ENCODE measurements at regions of chr22 and their contacts with region 1.

Region 1: DNA sequence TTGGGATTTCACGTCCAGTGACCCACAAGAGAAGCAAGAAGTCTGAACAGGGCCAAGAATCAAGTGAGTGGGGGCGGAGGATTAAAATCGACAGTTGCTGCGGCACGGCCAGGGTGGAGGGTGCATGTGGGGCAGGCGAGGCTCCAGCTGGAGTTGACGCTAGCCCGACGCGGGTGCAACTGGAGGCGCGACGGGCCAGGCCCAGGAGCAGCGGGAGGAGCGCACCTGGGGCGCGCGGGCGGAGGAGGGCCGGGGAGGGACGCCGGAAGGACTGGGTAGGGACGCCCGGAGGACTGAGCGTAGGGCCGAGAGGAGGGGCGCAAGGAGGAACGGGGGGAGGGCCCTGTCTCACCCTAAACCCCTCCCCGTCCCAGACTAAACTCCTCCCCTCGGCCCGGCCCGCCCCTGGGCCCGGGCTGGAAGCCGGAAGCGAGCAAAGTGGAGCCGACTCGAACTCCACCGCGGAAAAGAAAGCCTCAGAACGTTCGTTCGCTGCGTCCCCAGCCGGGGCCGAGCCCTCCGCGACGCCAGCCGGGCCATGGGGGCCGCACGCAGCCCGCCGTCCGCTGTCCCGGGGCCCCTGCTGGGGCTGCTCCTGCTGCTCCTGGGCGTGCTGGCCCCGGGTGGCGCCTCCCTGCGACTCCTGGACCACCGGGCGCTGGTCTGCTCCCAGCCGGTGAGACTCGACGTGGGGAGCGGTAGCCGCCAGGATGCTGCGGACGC is at the start of gene IL17RA:
- DNase-seq: peak; percentile 95
- H3K4me3 Mint-ChIP-seq: peak within 1 kb of the TSS; percentile 84
- H3K27ac Mint-ChIP-seq: peak within 1 kb of the TSS; percentile 85
- H3K4me1 Mint-ChIP-seq: peaks cover 42% of the 10 kb centered on the region
- H3K27me3 Mint-ChIP-seq: no peaks in the 10 kb centered on the region
- total RNA-seq, gene IL17RA: 10.2 to 10.7 TPM

Region 2: GRCh38 chr22:17121227-17122195 is 36.8 kb after region 1 on chr22 and contains the start of gene TMEM121B:
- CTCF ChIA-PET with region 1: no interaction called
- intact Hi-C with region 1: loop called (anchors 1 kb)
- DNase-seq: peak; percentile 54
- H3K4me3 Mint-ChIP-seq: peak within 1 kb of the TSS; percentile 62
- H3K27ac Mint-ChIP-seq: no peak within 1 kb of the TSS
- H3K4me1 Mint-ChIP-seq: peaks cover 38% of the 10 kb centered on the region
- H3K27me3 Mint-ChIP-seq: peaks cover 11% of the 10 kb centered on the region
- total RNA-seq, gene TMEM121B: 0.19 to 0.22 TPM

Region 3: DNA sequence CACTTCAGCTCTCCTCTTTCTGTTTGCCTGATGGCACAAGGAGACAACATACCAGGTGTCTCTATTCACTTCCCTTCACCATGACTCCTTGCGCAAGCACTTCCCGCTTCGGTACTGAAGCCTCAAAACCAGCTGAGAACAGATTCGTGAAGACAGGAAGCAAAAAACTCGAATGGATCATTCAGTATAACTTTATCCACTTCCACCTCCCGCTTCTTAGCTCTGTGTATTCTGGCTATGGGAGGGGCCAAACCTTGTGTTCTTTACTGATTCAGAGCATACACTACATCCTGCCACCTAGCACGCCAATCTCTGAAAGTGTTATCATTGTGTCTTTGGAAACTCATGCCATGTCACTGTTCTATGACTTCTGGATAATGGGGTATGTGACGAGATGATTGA is 196.7 kb after region 1 on chr22:
- CTCF ChIA-PET with region 1: no interaction called
- intact Hi-C with region 1: loop called (anchors 1 kb)
- DNase-seq: peak; percentile 71
- H3K4me3 Mint-ChIP-seq: peak overlapping the region; percentile 38
- H3K27ac Mint-ChIP-seq: peak overlapping the region; percentile 79
- H3K4me1 Mint-ChIP-seq: peaks cover 15% of the 10 kb centered on the region
- H3K27me3 Mint-ChIP-seq: no peaks in the 10 kb centered on the region

Region 4: GRCh38 chr22:17334059-17334458 is 249.3 kb after region 1 on chr22:
- CTCF ChIA-PET with region 1: no interaction called
- intact Hi-C with region 1: no loop called
- DNase-seq: no peak
- H3K4me3 Mint-ChIP-seq: no peak overlapping the region
- H3K27ac Mint-ChIP-seq: no peak overlapping the region
- H3K4me1 Mint-ChIP-seq: no peaks in the 10 kb centered on the region
- H3K27me3 Mint-ChIP-seq: no peaks in the 10 kb centered on the region

Region 5: DNA sequence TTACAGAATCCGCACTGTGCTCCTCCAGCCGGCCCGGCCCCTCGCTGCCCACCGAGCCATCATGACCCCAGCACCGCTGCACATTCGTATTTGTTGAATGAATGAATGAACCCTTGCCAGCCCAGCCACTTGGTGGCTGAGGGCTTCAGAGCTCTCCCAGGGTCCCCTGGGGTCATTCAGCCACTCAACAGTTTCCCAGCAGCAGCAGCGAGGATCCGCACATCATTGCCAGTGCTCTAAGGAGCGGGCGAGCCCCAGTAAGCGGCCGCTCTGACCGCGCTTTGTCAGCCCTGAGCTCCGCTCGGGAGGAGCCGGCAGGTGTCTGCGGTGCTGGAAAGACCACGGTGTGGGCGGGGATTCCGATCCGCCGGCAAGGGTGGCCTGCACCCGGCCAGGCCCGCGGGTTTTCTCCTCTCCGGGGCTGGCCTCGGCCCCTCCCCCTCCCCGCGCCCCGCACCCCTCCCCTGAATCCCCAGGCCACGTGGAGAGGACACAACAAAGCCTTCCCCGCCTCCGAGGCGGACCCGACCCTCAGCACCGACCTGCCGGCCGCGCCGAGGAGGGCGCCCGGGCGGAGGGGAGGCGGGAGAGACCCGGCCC is 689.0 kb after region 1 on chr22:
- CTCF ChIA-PET with region 1: no interaction called
- intact Hi-C with region 1: loop called (anchors 5 kb)
- DNase-seq: peak; percentile 79
- H3K4me3 Mint-ChIP-seq: peak overlapping the region; percentile 82
- H3K27ac Mint-ChIP-seq: peak overlapping the region; percentile 66
- H3K4me1 Mint-ChIP-seq: peaks cover 76% of the 10 kb centered on the region
- H3K27me3 Mint-ChIP-seq: no peaks in the 10 kb centered on the region